B cell (primary cell): ENCODE measurements at regions of chr6 and their contacts with region 1.

Region 1: GRCh38 chr6:31068669-31069340 is 43.6 kb downstream of the C6orf15 start:
- DNase-seq: peak; percentile 82
- ATAC-seq: peak; percentile 98
- H3K4me3 ChIP-seq: no peak overlapping the region
- H3K4me3 Mint-ChIP-seq: no peak overlapping the region
- H3K27ac ChIP-seq: no peak overlapping the region
- H3K27ac Mint-ChIP-seq: no peak overlapping the region
- H3K4me1 ChIP-seq: no peaks in the 10 kb centered on the region
- H3K4me1 Mint-ChIP-seq: peaks cover 2% of the 10 kb centered on the region
- H3K27me3 ChIP-seq: peaks cover 0 to 2% (median 0%) of the 10 kb centered on the region in 4 experiments
- H3K27me3 Mint-ChIP-seq: no peaks in the 10 kb centered on the region
- CTCF ChIP-seq: peak; percentile 92

Region 2: DNA sequence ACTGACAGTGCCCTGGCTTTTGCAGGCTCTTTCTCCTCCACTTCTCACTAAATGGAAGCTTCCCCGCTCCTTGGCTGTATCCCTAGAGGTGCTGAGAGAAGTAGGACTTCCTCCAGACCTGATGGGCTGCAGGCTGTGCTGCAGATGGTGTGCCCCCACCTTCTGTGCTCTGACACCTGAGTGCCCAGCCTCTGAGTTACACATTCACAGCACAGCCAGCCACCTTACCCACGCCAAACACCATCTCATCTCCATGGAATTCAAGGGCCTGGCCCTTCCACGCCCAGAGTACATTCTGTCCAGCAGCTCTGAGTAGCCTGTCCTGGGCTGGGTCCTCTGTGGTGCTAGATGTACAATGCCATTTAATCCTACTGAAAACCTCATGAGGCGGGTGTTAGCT is 142.2 kb before region 1 on chr6:
- CTCF ChIA-PET with region 1: no interaction called
- POLR2A ChIA-PET with region 1: no interaction called
- intact Hi-C with region 1: no loop called
- DNase-seq: no peak
- ATAC-seq: no peak
- H3K4me3 ChIP-seq: no peak overlapping the region
- H3K4me3 Mint-ChIP-seq: no peak overlapping the region
- H3K27ac ChIP-seq: no peak overlapping the region
- H3K27ac Mint-ChIP-seq: no peak overlapping the region
- H3K4me1 ChIP-seq: no peaks in the 10 kb centered on the region
- H3K4me1 Mint-ChIP-seq: no peaks in the 10 kb centered on the region
- H3K27me3 ChIP-seq: no peaks in the 10 kb centered on the region
- H3K27me3 Mint-ChIP-seq: no peaks in the 10 kb centered on the region
- CTCF ChIP-seq: no peak

Region 3: DNA sequence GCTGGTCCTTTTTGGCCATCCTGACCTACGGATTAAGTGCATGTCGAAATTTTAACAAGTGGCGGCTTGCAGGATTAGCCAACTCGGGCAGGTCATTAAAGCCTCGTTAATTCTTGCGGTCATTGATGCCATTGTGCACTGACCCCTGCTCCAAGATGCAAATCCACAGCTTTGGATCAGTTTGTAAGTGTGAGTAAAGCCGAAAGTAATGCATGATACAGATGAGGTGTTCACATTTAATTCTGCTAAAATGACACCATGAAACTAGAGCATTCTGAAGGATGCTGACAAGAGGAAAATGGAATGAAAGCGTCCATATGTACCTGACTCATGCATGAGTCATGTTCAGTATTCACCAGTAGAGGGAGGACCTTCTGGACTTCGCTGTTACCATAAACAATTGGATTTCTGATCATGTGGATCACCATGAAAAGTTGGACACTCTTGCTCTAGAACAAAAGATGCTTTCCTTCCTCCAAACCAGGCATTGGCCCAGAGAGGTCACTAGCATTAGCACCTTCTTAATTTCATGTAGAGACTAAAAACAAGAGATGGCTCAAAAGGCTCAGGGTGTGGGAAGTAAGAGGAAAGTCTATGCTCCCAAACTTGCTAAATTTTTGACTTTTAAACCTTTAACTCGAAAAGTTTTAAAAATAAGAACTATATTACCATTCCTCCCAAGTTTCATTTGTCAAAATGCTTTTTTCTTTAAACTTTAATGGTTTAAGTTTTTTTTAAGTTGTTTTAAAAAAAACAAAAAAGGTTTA is 10.5 kb before region 1 on chr6:
- CTCF ChIA-PET with region 1: interaction called, 10 read pairs
- POLR2A ChIA-PET with region 1: no interaction called
- intact Hi-C with region 1: no loop called
- DNase-seq: no peak
- ATAC-seq: no peak
- H3K4me3 ChIP-seq: no peak overlapping the region
- H3K4me3 Mint-ChIP-seq: no peak overlapping the region
- H3K27ac ChIP-seq: no peak overlapping the region
- H3K27ac Mint-ChIP-seq: no peak overlapping the region
- H3K4me1 ChIP-seq: no peaks in the 10 kb centered on the region
- H3K4me1 Mint-ChIP-seq: peaks cover 12% of the 10 kb centered on the region
- H3K27me3 ChIP-seq: peaks cover 0 to 4% (median 0%) of the 10 kb centered on the region in 4 experiments
- H3K27me3 Mint-ChIP-seq: no peaks in the 10 kb centered on the region
- CTCF ChIP-seq: no peak

Region 4: GRCh38 chr6:31087494-31088089 is 18.8 kb after region 1 on chr6:
- CTCF ChIA-PET with region 1: interaction called, 29 read pairs
- POLR2A ChIA-PET with region 1: no interaction called
- intact Hi-C with region 1: no loop called
- DNase-seq: peak; percentile 89
- ATAC-seq: peak; percentile 95
- H3K4me3 ChIP-seq: no peak overlapping the region
- H3K4me3 Mint-ChIP-seq: no peak overlapping the region
- H3K27ac ChIP-seq: no peak overlapping the region
- H3K27ac Mint-ChIP-seq: no peak overlapping the region
- H3K4me1 ChIP-seq: no peaks in the 10 kb centered on the region
- H3K4me1 Mint-ChIP-seq: no peaks in the 10 kb centered on the region
- H3K27me3 ChIP-seq: no peaks in the 10 kb centered on the region
- H3K27me3 Mint-ChIP-seq: peaks cover 21% of the 10 kb centered on the region
- CTCF ChIP-seq: peak; percentile 84